Calu3 (cell line): ENCODE measurements at regions of chr9 and their contacts with region 1.

Region 1: GRCh38 chr9:74901001-74901400 is 13.3 kb upstream of the TRPM6 start:
- DNase-seq: no peak
- H3K4me3 Mint-ChIP-seq: no peak overlapping the region
- H3K27ac Mint-ChIP-seq: no peak overlapping the region
- H3K4me1 Mint-ChIP-seq: no peaks in the 10 kb centered on the region
- H3K27me3 Mint-ChIP-seq: no peaks in the 10 kb centered on the region
- CTCF ChIP-seq: no peak

Region 2: GRCh38 chr9:74804018-74804385 is 97.0 kb before region 1 on chr9:
- CTCF ChIA-PET with region 1: no interaction called
- intact Hi-C with region 1: no loop called
- DNase-seq: no peak
- H3K4me3 Mint-ChIP-seq: no peak overlapping the region
- H3K27ac Mint-ChIP-seq: no peak overlapping the region
- H3K4me1 Mint-ChIP-seq: no peaks in the 10 kb centered on the region
- H3K27me3 Mint-ChIP-seq: no peaks in the 10 kb centered on the region
- CTCF ChIP-seq: no peak

Region 3: GRCh38 chr9:74920944-74921626 is 20.1 kb after region 1 on chr9:
- CTCF ChIA-PET with region 1: no interaction called
- intact Hi-C with region 1: loop called (anchors 1 kb)
- DNase-seq: no peak
- H3K4me3 Mint-ChIP-seq: no peak overlapping the region
- H3K27ac Mint-ChIP-seq: no peak overlapping the region
- H3K4me1 Mint-ChIP-seq: no peaks in the 10 kb centered on the region
- H3K27me3 Mint-ChIP-seq: no peaks in the 10 kb centered on the region
- CTCF ChIP-seq: no peak

Region 4: DNA sequence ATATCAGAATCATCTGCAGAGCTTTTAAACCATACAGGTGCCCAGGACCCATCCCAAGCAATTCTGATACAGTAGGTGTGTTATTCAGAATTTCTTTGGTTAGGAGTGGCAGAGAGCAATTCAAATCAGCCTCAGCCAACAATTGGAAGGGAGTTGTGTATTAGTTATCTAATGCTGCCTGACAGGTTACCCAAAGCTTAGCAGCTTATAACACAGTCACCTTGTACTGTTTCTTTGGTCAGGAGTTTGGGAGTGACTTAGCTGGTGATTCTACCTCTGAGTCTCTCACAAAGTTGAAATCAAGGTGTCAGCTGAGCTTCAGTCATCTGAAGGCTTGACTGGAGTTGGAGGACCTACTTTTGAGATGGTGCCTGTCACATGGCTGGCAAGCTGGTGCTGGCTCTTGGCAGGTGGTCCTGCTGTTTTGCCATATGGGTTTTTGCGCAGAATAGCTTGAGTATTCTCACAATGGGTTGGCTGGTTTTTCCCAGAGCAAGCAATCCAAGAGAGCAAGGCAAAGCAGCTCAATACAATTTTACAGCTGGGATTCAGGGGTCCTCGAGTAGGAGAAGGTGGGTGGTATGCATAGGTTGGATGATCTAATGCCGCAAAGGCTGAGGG is 145.8 kb after region 1 on chr9:
- CTCF ChIA-PET with region 1: no interaction called
- intact Hi-C with region 1: no loop called
- DNase-seq: no peak
- H3K4me3 Mint-ChIP-seq: no peak overlapping the region
- H3K27ac Mint-ChIP-seq: no peak overlapping the region
- H3K4me1 Mint-ChIP-seq: no peaks in the 10 kb centered on the region
- H3K27me3 Mint-ChIP-seq: peaks cover 20% of the 10 kb centered on the region
- CTCF ChIP-seq: no peak

Region 5: GRCh38 chr9:75358846-75359245 is 457.8 kb after region 1 on chr9:
- CTCF ChIA-PET with region 1: no interaction called
- intact Hi-C with region 1: no loop called
- DNase-seq: no peak
- H3K4me3 Mint-ChIP-seq: no peak overlapping the region
- H3K27ac Mint-ChIP-seq: no peak overlapping the region
- H3K4me1 Mint-ChIP-seq: no peaks in the 10 kb centered on the region
- H3K27me3 Mint-ChIP-seq: peaks cover 14% of the 10 kb centered on the region
- CTCF ChIP-seq: no peak